Panc1 (cell line): ENCODE measurements at regions of chr5 and their contacts with region 1.

Region 1: GRCh38 chr5:96324708-96325107 is 108.3 kb downstream of the PCSK1 start:
- DNase-seq: peak; percentile 71
- ATAC-seq: peak; percentile 91
- H3K4me3 ChIP-seq: no peak overlapping the region
- H3K27ac ChIP-seq: peak overlapping the region; percentile 31; the same call in 1 of the 2 replicates
- H3K4me1 ChIP-seq: peaks cover 8% of the 10 kb centered on the region; the same call in 1 of the 2 replicates
- H3K27me3 ChIP-seq: no peaks in the 10 kb centered on the region
- CTCF ChIP-seq: no peak

Region 2: GRCh38 chr5:96129276-96129675 is 195.4 kb before region 1 on chr5:
- CTCF ChIA-PET with region 1: no interaction called
- POLR2A ChIA-PET with region 1: interaction called, 11 read pairs
- in situ Hi-C with region 1: no loop called
- intact Hi-C with region 1: no loop called
- DNase-seq: no peak
- ATAC-seq: no peak
- H3K4me3 ChIP-seq: no peak overlapping the region
- H3K27ac ChIP-seq: no peak overlapping the region
- H3K4me1 ChIP-seq: peaks cover 3% of the 10 kb centered on the region; the same call in 1 of the 2 replicates
- H3K27me3 ChIP-seq: no peaks in the 10 kb centered on the region
- CTCF ChIP-seq: no peak

Region 3: GRCh38 chr5:96447949-96448348 is 123.2 kb after region 1 on chr5:
- CTCF ChIA-PET with region 1: no interaction called
- POLR2A ChIA-PET with region 1: interaction called, 12 read pairs
- in situ Hi-C with region 1: no loop called
- intact Hi-C with region 1: no loop called
- DNase-seq: no peak
- ATAC-seq: no peak
- H3K4me3 ChIP-seq: no peak overlapping the region
- H3K27ac ChIP-seq: no peak overlapping the region
- H3K4me1 ChIP-seq: no peaks in the 10 kb centered on the region
- H3K27me3 ChIP-seq: peaks cover 26% of the 10 kb centered on the region
- CTCF ChIP-seq: no peak